ENCODE measurements at regions of chr10 and their contacts with region 1.

Region 1: DNA sequence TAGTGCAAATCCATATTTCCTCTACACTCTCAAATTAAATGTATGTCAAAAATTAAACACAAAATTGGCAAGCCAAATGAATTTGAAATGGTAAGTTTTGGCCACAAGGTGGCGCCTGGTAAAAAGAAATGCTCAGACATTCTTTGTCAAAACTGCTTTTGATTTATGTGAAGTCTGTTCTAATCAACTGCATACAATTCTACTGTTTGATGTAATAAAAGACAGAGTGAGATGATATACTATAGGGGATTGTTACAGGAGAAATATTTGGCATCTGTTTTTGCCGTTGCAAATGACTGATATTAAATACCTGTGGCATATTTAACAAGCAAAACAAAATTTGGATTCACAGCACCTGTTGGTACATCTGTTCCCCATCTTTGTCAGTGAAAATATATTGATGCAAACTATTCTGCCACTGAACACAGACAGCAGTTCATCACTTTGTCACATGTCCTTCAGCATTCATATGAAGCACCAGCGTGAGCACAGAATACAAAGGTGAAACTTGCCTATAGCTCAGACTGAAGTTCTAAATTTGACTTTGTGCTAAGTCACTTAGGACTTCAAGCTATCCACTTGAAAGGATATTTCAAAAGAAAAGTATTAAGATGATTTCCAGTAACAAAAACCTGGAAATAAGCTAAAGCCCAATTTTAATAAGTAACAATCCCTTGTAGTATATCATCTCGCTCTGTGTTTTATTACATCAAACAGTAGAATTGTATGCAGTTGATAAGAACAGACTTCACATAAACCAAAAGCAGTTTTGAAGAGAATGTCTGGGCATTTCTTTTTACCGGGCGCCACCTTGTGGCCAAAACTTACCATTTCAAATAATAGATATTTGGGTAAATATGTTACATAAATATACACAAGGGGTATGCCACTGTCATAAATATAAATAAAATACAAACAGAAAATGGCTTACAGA is 10.2 kb upstream of the CH25H start:
- DNase-seq: peak; percentile 81
- H3K4me3 Mint-ChIP-seq: no peak overlapping the region
- H3K27ac Mint-ChIP-seq: no peak overlapping the region
- H3K4me1 Mint-ChIP-seq: peaks cover 7% of the 10 kb centered on the region
- H3K27me3 Mint-ChIP-seq: peaks cover 2% of the 10 kb centered on the region

Region 2: DNA sequence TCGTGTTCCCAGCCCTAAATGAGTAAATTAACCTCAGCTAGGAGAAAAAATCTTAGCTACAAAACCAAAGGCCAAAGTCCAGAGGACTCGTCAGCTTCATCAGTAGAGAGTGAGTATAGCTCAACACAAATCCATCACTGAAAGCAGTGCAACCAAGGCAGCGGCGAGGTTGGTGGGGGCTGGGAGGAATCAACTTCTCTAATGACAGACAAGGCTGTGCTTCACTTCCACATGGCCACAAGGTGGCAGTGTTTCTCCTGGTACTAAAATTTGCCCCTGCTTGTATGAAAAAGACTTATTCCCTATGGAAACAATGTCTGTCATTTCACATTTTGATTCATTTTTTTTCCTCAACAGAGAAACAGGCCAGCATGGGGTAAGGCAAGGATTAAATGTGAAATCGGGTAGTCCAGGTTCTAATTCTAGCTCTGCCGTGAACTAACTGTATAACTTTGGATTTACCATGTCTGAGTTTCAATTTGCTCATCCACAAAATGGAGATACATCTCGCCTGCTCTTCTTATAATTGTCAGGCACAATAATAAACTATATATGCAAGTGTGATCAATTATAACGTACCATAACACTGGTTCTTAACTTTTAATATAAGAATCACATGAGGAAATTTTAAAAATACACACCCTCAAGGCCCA is 187.4 kb before region 1 on chr10:
- CTCF ChIA-PET with region 1: interaction called, 99 read pairs
- intact Hi-C with region 1: loop called (anchors 1 kb)
- DNase-seq: peak; percentile 85
- H3K4me3 Mint-ChIP-seq: no peak overlapping the region
- H3K27ac Mint-ChIP-seq: no peak overlapping the region
- H3K4me1 Mint-ChIP-seq: peaks cover 22% of the 10 kb centered on the region
- H3K27me3 Mint-ChIP-seq: no peaks in the 10 kb centered on the region

Region 3: DNA sequence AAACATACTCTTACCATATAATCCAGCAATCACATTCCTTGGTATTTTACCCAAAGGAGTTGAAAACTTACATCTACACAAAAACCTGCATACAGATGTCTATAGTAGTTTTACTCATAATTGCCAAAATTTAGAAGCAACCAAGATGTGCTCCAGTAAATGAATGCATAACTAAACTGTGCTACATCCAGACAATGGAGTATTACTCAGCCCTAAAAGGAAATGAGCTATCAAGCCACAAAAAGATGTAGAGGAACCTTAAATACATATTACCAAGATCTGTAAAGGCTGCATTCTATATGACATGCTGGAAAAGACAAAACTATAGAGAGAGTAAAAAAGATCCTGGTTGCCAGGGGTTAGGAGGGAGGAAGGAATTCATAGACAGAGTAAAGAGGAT is 11.6 kb after region 1 on chr10:
- CTCF ChIA-PET with region 1: interaction called, 12 read pairs
- intact Hi-C with region 1: no loop called
- DNase-seq: no peak
- H3K4me3 Mint-ChIP-seq: no peak overlapping the region
- H3K27ac Mint-ChIP-seq: no peak overlapping the region
- H3K4me1 Mint-ChIP-seq: peaks cover 5% of the 10 kb centered on the region
- H3K27me3 Mint-ChIP-seq: no peaks in the 10 kb centered on the region

Region 4: GRCh38 chr10:89251409-89252224 is 34.3 kb after region 1 on chr10 and contains the start of gene LIPA:
- CTCF ChIA-PET with region 1: interaction called, 14 read pairs
- intact Hi-C with region 1: loop called (anchors 2 kb)
- DNase-seq: peak; percentile 95
- H3K4me3 Mint-ChIP-seq: peak within 1 kb of the TSS; percentile 84
- H3K27ac Mint-ChIP-seq: no peak within 1 kb of the TSS
- H3K4me1 Mint-ChIP-seq: peaks cover 38% of the 10 kb centered on the region
- H3K27me3 Mint-ChIP-seq: no peaks in the 10 kb centered on the region
- total RNA-seq, gene LIPA: 16.1 to 17.2 TPM

Region 5: DNA sequence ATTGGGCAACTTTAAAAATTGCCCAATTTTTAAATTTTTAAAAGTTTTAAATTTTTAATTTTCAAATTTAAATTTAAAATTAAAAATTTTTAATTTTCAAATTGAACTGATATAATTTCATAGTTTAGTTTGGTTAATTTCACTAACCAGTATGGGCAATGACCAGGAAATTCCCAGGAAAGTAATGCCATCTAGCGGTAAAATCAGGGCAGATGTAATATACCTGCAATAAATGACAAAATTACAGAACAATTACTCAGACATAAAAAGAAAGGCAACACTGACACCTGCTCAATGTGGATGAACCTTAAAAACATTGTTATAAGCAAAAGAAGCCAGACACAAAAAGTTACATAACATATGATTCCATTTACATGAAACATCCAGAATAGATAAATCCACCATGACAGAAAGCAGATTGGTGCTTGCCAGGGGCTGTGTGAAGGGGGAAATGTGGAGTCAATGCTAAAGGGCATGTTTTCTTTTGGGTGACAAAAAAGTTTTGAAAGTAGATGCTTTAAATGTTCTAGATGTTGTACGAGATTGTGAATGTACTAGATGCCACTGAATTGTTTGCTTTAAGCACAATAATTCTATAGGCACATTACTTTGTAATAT is 346.6 kb after region 1 on chr10:
- CTCF ChIA-PET with region 1: interaction called, 4 read pairs
- intact Hi-C with region 1: loop called (anchors 1 kb)
- DNase-seq: peak; percentile 27
- H3K4me3 Mint-ChIP-seq: no peak overlapping the region
- H3K27ac Mint-ChIP-seq: no peak overlapping the region
- H3K4me1 Mint-ChIP-seq: no peaks in the 10 kb centered on the region
- H3K27me3 Mint-ChIP-seq: peaks cover 8% of the 10 kb centered on the region

Region 6: DNA sequence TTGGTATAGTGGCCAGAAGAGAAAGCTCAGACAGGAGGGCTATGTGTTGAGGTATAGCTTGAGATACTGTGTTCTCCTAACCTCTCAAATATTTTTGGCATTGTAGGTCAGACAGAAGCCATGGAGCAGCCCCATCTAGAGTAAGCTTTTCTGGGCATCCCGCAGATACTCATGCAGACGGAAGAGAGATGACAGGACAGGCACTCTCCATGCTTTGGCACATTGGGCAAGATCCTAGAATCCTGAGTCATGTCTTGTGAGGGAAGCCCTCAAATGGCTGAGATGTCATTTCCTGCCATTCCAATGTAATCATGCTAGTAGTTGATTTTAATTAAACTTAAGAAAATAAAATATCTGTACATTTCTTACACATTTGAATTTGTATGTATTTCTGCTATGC is 467.3 kb after region 1 on chr10:
- CTCF ChIA-PET with region 1: no interaction called
- intact Hi-C with region 1: no loop called
- DNase-seq: no peak
- H3K4me3 Mint-ChIP-seq: no peak overlapping the region
- H3K27ac Mint-ChIP-seq: no peak overlapping the region
- H3K4me1 Mint-ChIP-seq: no peaks in the 10 kb centered on the region
- H3K27me3 Mint-ChIP-seq: peaks cover 19% of the 10 kb centered on the region